Aorta (tissue), 5 donors: ENCODE measurements at regions of chr9 and their contacts with region 1.

Region 1: GRCh38 chr9:33374634-33375213 is 27.6 kb downstream of the AQP7 start:
- DNase-seq: peak in 1 of 2 donors; percentile 78
- ATAC-seq: peak; percentile 90
- H3K4me3 ChIP-seq: no peak overlapping the region
- H3K27ac ChIP-seq: no peak overlapping the region
- H3K4me1 ChIP-seq: no peaks in the 10 kb centered on the region
- H3K27me3 ChIP-seq: no peaks in the 10 kb centered on the region

Region 2: DNA sequence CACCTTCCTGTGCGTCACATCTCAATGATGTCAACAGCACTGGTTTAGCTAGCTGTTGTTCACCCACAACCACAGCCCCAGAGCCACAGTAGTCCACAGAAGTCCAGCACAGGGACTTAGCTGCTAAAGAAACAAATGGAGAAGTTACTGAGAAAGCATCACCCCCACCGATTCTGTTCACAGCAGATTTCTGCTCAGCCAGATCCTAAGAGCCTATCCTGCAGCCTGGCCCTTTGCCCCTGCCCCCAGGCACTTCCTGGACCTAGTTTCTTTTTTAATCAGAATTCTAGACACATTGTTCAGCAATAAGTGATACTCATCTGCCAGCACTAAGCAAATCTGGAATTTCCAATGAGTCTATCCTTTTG is 215.0 kb before region 1 on chr9:
- intact Hi-C with region 1: no loop called
- DNase-seq: peak in 1 of 2 donors; percentile 85
- ATAC-seq: peak; percentile 20
- H3K4me3 ChIP-seq: no peak overlapping the region
- H3K27ac ChIP-seq: peak overlapping the region in 1 of 2 donors; percentile 58
- H3K4me1 ChIP-seq: peaks cover 14 to 36% of the 10 kb centered on the region in 2 donors
- H3K27me3 ChIP-seq: no peaks in the 10 kb centered on the region

Region 3: DNA sequence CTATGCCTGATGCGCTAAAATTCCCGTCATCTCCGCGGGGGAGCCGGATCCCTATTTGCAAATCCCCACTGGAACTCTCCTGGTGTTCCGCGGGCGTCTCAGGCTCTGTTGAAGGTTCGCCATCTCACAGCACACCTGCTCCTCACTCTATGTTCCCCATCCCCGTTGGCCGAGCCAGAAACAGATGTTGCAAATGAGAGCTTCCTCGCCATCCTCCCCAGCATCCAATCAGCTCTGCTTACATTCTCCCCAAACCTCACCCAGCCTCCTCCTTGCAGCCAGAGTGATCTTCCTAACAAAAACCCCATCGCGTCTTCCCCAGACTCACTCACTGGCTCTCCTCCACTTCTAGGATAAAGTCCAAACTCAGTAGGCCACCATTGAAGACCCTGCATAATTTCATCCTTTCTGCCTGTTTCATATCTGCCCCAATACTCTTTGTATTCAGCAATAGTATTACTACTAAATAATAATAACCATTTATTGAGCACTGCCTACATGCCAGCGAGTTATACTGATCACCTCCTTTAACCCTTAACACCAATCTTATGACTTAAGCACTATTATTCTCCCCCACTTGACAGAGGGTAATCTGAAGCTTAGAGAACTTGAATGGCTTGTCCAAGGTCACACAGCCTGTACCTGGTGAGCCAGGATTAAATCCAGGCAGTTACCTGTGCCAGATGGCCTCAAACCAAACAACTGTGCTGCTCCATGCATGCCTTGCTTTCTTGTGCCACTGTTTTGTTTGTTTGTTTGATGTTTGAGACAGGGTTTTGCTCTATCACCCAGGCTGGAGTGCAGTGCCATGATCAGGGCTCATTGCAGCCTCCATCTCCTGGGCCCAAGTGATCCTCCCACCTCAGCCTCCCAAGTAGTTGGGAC is 13.6 kb after region 1 on chr9:
- intact Hi-C with region 1: no loop called
- DNase-seq: no peak
- ATAC-seq: no peak
- H3K4me3 ChIP-seq: no peak overlapping the region
- H3K27ac ChIP-seq: no peak overlapping the region
- H3K4me1 ChIP-seq: no peaks in the 10 kb centered on the region
- H3K27me3 ChIP-seq: no peaks in the 10 kb centered on the region

Region 4: DNA sequence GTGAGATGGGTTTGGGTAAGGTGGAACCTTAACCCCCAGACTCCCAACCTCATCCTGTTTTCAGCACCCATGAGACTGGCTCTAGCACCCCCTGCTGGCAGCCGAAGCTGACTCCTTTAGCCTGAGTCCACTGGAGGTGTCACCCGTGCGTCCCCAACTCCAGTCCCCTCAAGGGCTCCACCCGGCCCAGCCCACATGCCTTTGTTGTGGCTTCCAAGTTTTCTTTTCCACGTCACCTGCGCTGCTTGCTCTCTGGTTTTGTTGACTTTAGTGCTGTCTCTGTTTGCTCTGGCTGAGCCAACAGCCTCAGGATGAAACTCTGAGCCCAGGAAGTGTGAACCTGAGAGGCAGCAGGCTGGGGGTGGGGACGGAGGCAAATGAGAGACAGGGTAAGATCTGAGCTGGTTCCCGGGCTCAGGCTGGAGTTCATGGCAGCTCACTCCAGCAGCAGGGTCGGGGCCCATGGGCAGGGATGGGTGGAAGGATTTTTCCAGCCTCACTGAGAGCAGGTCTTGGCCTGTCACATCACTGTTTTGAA is 40.8 kb after region 1 on chr9:
- intact Hi-C with region 1: loop called (anchors 1 to 2 kb)
- DNase-seq: peak; percentile 79 to 92
- ATAC-seq: peak; percentile 76
- H3K4me3 ChIP-seq: no peak overlapping the region
- H3K27ac ChIP-seq: no peak overlapping the region
- H3K4me1 ChIP-seq: no peaks in the 10 kb centered on the region
- H3K27me3 ChIP-seq: no peaks in the 10 kb centered on the region

Region 5: DNA sequence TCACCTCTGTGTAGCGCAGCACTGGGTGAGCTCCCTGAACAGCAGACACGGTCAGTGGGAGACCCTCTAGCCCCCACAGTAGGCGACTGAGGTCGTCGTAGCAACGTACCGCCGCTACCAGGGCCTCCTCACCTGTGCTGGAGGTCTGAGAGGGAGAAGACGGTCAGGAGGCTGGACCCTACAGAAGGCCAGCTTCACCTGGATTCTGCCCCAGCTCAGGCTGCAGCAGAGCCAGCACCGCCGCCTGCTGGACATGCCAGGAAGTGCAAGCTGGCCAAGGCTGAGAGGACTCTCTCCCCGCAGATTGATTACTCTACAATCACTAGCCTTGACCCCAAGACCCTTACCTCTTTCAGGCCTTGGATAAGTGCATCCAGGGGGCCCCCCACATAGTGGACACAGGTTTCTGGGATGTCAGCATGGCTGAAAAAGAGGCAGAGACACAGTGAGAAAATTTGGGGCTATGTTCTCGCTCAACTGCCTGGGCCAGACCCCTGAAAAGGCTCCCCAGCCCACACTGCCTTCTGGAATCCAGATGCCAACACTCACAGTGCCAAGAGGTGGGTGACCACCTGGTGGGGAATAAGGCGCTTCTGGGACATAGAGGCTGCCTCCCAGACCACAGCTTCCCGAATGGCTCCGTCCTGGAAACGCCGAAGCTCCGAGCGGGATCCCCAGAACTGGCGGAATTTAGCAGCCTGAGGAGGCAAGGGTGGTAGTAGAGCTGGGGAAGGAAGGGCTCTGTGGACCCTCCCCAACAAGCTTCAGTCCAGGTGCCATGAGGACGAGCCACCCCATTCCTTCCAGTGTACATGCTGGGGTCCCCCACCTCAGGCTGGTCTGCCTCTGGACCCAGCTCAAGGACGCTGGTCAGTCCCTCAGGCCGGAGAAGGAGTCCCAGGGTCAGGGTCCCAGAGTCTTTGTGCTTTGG is 92.1 kb after region 1 on chr9:
- intact Hi-C with region 1: loop called in 1 of 2 experiments (anchors 5 kb)
- DNase-seq: peak; percentile 62 to 88
- ATAC-seq: peak; percentile 53
- H3K4me3 ChIP-seq: no peak overlapping the region
- H3K27ac ChIP-seq: no peak overlapping the region
- H3K4me1 ChIP-seq: no peaks in the 10 kb centered on the region
- H3K27me3 ChIP-seq: no peaks in the 10 kb centered on the region